WTC11 (cell line): ENCODE measurements at regions of chr11 and their contacts with region 1.

Region 1: GRCh38 chr11:62787005-62787759 is at the start of gene TMEM179B:
- DNase-seq: peak; percentile 99
- ATAC-seq: peak; percentile 74
- H3K4me3 Mint-ChIP-seq: peak within 1 kb of the TSS; percentile 91
- H3K27ac Mint-ChIP-seq: peak within 1 kb of the TSS; percentile 99
- H3K4me1 Mint-ChIP-seq: peaks cover 33% of the 10 kb centered on the region
- H3K27me3 Mint-ChIP-seq: no peaks in the 10 kb centered on the region; the same call in 1 of the 2 replicates
- CTCF ChIP-seq: no peak
- total RNA-seq, gene TMEM179B: 21.4 to 23.6 TPM (median 22.2 TPM) in 3 replicates

Region 2: DNA sequence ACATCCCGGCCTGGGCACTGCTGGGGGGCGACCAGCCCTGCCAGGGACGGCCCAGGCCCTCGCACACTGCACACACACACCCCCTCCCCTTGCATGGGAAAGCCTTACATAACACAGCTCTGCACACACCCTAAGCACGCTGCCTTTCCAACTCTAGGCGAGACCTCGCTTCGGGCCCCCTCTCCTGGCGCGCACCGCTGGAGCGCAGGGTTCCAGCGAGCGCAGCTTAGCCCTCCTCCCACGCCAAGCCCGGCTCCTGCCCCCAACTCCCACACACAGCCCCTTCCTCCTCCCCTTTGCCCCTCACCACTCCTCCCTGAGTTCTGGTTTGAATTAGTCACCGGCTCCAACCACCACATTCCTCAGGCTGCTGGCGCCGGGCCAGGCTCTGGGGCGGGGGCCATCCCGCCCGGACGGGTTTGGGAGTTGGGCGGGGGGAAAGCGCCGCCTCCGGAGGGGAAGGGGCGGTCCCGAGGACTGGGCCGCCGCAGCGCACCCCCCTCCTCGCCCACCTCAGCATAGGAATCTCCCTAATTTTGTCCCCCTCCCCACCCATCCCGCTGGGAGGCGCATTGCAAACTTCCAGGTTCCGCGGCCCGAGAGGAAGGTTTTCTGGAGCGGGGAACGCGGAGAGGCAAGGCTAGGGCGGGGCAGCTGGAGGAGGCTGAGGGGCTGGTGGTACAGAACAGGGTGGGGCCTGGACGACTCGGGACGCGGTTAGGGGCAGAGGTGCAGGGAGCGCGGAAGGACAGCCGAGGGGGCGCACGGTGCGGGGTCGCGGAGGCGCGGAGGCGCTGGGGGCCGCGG is 241.5 kb before region 1 on chr11:
- CTCF ChIA-PET with region 1: no interaction called
- POLR2A ChIA-PET with region 1: no interaction called
- DNase-seq: peak; percentile 80
- ATAC-seq: peak; percentile 48
- H3K4me3 Mint-ChIP-seq: peak overlapping the region; percentile 82
- H3K27ac Mint-ChIP-seq: no peak overlapping the region
- H3K4me1 Mint-ChIP-seq: peaks cover 43% of the 10 kb centered on the region
- H3K27me3 Mint-ChIP-seq: peaks cover 92% of the 10 kb centered on the region
- CTCF ChIP-seq: no peak

Region 3: DNA sequence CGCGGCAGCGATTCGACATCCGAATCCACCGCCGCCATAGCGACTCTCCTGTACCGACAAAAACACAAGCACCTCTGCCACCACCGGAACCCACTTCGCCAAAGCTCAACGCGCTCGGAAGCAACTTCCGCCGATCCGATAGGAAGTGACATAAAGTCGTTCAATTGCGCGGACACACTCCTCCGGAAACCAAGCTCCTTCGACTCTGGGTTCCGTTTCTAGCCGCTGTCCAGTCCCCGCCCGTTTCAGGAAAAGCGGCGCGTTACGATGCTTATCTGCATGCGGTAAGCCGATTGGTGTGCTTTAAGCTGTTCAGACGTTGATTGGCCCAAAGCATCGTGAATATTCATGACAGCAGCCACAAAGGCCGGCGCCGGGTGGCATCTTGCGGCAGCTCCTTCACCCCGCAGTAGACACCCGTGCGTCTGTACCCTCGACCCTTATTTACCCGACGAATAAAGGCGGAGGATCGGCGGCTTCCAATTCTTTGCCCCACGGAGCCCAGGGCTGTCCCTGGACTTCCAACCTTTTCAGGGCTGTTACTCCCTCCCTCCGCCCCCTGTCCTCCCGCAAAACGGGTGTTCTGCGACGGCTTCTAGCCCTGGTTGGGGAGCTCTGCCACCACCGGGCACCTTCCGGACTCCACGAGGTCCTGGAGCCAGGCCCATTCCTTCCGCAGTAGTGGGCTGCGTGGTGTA is 195.6 kb before region 1 on chr11 and contains the start of gene TUT1:
- CTCF ChIA-PET with region 1: interaction called, 16 read pairs
- POLR2A ChIA-PET with region 1: interaction called, 6 read pairs
- DNase-seq: peak; percentile 96
- ATAC-seq: peak; percentile 89
- H3K4me3 Mint-ChIP-seq: peak within 1 kb of the TSS; percentile 99
- H3K27ac Mint-ChIP-seq: peak within 1 kb of the TSS; percentile 91
- H3K4me1 Mint-ChIP-seq: peaks cover 19% of the 10 kb centered on the region
- H3K27me3 Mint-ChIP-seq: no peaks in the 10 kb centered on the region; the same call in 1 of the 2 replicates
- CTCF ChIP-seq: no peak
- total RNA-seq, gene TUT1: 35.3 to 40.0 TPM (median 37.3 TPM) in 3 replicates

Region 4: GRCh38 chr11:62705880-62706849 is 81.0 kb before region 1 on chr11:
- CTCF ChIA-PET with region 1: interaction called, 24 read pairs
- POLR2A ChIA-PET with region 1: interaction called, 5 read pairs
- DNase-seq: peak; percentile 96
- ATAC-seq: peak; percentile 61
- H3K4me3 Mint-ChIP-seq: peak overlapping the region; percentile 92
- H3K27ac Mint-ChIP-seq: peak overlapping the region; percentile 98
- H3K4me1 Mint-ChIP-seq: peaks cover 38% of the 10 kb centered on the region
- H3K27me3 Mint-ChIP-seq: no peaks in the 10 kb centered on the region; the same call in 1 of the 2 replicates
- CTCF ChIP-seq: no peak

Region 5: GRCh38 chr11:62771144-62772021 is 15.8 kb before region 1 on chr11 and contains the start of gene TAF6L:
- CTCF ChIA-PET with region 1: interaction called, 121 read pairs
- POLR2A ChIA-PET with region 1: interaction called, 25 read pairs
- DNase-seq: peak; percentile 96
- ATAC-seq: peak; percentile 82
- H3K4me3 Mint-ChIP-seq: peak within 1 kb of the TSS; percentile 88
- H3K27ac Mint-ChIP-seq: peak within 1 kb of the TSS; percentile 98
- H3K4me1 Mint-ChIP-seq: peaks cover 14% of the 10 kb centered on the region
- H3K27me3 Mint-ChIP-seq: no peaks in the 10 kb centered on the region; the same call in 1 of the 2 replicates
- CTCF ChIP-seq: no peak
- total RNA-seq, gene TAF6L: 33.8 to 42.1 TPM (median 36.3 TPM) in 3 replicates

Region 6: GRCh38 chr11:62841361-62842184 is 54.4 kb after region 1 on chr11:
- CTCF ChIA-PET with region 1: interaction called, 29 read pairs
- POLR2A ChIA-PET with region 1: interaction called, 18 read pairs
- DNase-seq: peak; percentile 87
- ATAC-seq: peak; percentile 77
- H3K4me3 Mint-ChIP-seq: no peak overlapping the region
- H3K27ac Mint-ChIP-seq: no peak overlapping the region
- H3K4me1 Mint-ChIP-seq: peaks cover 15% of the 10 kb centered on the region
- H3K27me3 Mint-ChIP-seq: no peaks in the 10 kb centered on the region
- CTCF ChIP-seq: no peak

Region 7: GRCh38 chr11:62880803-62881578 is 93.8 kb after region 1 on chr11 and contains the start of gene SLC3A2:
- CTCF ChIA-PET with region 1: interaction called, 9 read pairs
- POLR2A ChIA-PET with region 1: interaction called, 12 read pairs
- DNase-seq: peak; percentile 87
- ATAC-seq: peak; percentile 80
- H3K4me3 Mint-ChIP-seq: peak within 1 kb of the TSS; percentile 99
- H3K27ac Mint-ChIP-seq: peak within 1 kb of the TSS; percentile 100
- H3K4me1 Mint-ChIP-seq: peaks cover 49% of the 10 kb centered on the region
- H3K27me3 Mint-ChIP-seq: peaks cover 3% of the 10 kb centered on the region; the same call in 1 of the 2 replicates
- CTCF ChIP-seq: peak; percentile 22; the same call in 1 of the 2 replicates
- total RNA-seq, gene SLC3A2: 244 to 334 TPM (median 265 TPM) in 3 replicates